CD14-positive monocyte (primary cell): ENCODE measurements at regions of chr19 and their contacts with region 1.

Region 1: GRCh38 chr19:5803752-5804515 is 933 bp upstream of the NRTN start:
- DNase-seq: peak; percentile 69 to 85 (median 80)
- H3K4me3 ChIP-seq: peak overlapping the region in 2 of 3 experiments; percentile 27 to 67
- H3K4me3 Mint-ChIP-seq: peak overlapping the region; percentile 60 to 86
- H3K27ac ChIP-seq: no peak overlapping the region
- H3K27ac Mint-ChIP-seq: peak overlapping the region in 2 of 7 donors; percentile 63 to 65
- H3K4me1 ChIP-seq: peaks cover 15 to 16% of the 10 kb centered on the region in 2 donors
- H3K4me1 Mint-ChIP-seq: peaks cover 24% of the 10 kb centered on the region
- H3K27me3 ChIP-seq: peaks cover 10 to 55% of the 10 kb centered on the region in 2 donors
- H3K27me3 Mint-ChIP-seq: peaks cover 63 to 82% (median 74%) of the 10 kb centered on the region in 3 donors
- CTCF ChIP-seq: peak; percentile 95

Region 2: DNA sequence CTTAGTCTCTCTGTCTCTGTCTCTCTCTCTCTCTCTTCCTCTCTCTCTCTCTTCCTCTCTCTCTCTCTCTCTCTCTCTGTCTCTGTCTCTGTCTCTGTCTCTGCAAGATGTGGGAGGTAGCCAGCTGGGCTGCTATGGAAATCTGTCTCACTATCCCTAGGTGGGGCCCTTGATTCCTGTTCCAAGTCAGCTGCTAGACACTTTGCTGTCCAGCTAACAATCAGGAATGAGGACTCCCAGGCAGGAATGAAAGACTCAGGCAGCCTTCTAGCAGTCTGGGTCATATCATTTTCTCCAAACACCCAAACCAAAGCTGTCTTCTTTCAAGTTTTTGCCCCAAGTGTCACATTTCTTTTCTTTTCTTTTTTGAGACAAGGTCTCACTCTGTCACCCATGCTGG is 60.3 kb before region 1 on chr19:
- intact Hi-C with region 1: no loop called
- DNase-seq: no peak
- H3K4me3 ChIP-seq: no peak overlapping the region
- H3K4me3 Mint-ChIP-seq: no peak overlapping the region
- H3K27ac ChIP-seq: no peak overlapping the region
- H3K27ac Mint-ChIP-seq: peak overlapping the region in 1 of 7 donors; percentile 52
- H3K4me1 ChIP-seq: no peaks in the 10 kb centered on the region
- H3K4me1 Mint-ChIP-seq: no peaks in the 10 kb centered on the region
- H3K27me3 ChIP-seq: no peaks in the 10 kb centered on the region
- H3K27me3 Mint-ChIP-seq: peaks cover 2 to 6% (median 4%) of the 10 kb centered on the region in 3 donors
- CTCF ChIP-seq: no peak

Region 3: DNA sequence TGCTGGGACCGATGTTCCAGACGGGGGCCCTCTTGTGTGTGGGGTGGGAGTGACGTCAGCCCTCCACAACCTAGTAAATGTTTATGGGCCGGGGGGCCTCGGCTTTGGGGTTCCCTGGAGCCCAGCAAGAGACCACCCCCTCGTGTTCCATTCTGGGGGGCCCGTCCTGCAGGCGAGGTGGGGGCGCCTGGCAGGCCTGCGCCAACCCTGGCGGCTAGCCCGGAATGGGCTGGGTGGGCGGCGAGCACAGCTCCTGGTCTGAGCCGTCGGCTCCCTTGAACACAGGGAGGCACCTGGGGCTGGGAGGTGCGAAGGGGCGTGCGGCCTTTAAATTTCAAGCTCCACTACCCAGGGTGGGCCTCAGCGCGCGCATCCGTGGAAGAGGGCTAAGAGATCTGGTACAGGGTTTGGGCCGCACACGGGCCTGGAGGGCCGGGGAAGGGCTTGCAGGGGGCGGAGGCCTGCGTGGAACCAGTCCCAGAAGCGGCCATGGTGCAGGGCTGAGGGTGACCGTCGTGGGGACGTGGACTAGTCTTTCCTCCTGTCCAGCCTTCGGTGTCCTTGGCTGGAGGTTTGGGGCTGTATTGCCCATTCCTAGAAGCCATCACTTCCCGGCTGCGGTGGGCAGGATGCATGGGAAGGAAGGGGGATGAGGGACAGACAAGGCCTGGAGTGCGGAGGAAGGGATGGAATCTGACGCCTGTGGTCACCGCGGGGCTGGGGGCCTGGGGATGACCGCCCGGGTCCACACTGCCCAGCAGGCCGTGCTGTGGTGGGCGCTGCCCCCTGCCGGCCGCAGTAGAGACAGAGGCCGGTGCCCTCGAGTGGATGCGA is 88.2 kb after region 1 on chr19:
- intact Hi-C with region 1: loop called in 1 of 2 experiments (anchors 5 kb)
- DNase-seq: no peak
- H3K4me3 ChIP-seq: no peak overlapping the region
- H3K4me3 Mint-ChIP-seq: peak overlapping the region in 1 of 2 donors; percentile 42
- H3K27ac ChIP-seq: no peak overlapping the region
- H3K27ac Mint-ChIP-seq: no peak overlapping the region
- H3K4me1 ChIP-seq: no peaks in the 10 kb centered on the region
- H3K4me1 Mint-ChIP-seq: no peaks in the 10 kb centered on the region
- H3K27me3 ChIP-seq: peaks cover 0 to 14% of the 10 kb centered on the region in 2 donors
- H3K27me3 Mint-ChIP-seq: peaks cover 22 to 41% (median 24%) of the 10 kb centered on the region in 3 donors
- CTCF ChIP-seq: peak; percentile 63

Region 4: GRCh38 chr19:6125571-6125989 is 321.6 kb after region 1 on chr19:
- intact Hi-C with region 1: no loop called
- DNase-seq: peak; percentile 67 to 86 (median 77)
- H3K4me3 ChIP-seq: no peak overlapping the region
- H3K4me3 Mint-ChIP-seq: no peak overlapping the region
- H3K27ac ChIP-seq: no peak overlapping the region
- H3K27ac Mint-ChIP-seq: peak overlapping the region in 2 of 7 donors; percentile 75 to 78
- H3K4me1 ChIP-seq: no peaks in the 10 kb centered on the region
- H3K4me1 Mint-ChIP-seq: peaks cover 2% of the 10 kb centered on the region
- H3K27me3 ChIP-seq: no peaks in the 10 kb centered on the region
- H3K27me3 Mint-ChIP-seq: peaks cover 0 to 8% (median 4%) of the 10 kb centered on the region in 3 donors
- CTCF ChIP-seq: peak; percentile 96